ENCODE measurements at regions of chr3 and their contacts with region 1.

Region 1: GRCh38 chr3:196528639-196529233 is 13.6 kb upstream of the SMCO1 start:
- DNase-seq: no peak
- H3K4me3 ChIP-seq: peak overlapping the region; percentile 57
- CTCF ChIP-seq: peak; percentile 82

Region 2: GRCh38 chr3:196506687-196507086 is 22.0 kb before region 1 on chr3:
- CTCF ChIA-PET with region 1: interaction called, 23 read pairs
- POLR2A ChIA-PET with region 1: no interaction called
- DNase-seq: no peak
- H3K4me3 ChIP-seq: no peak overlapping the region
- CTCF ChIP-seq: no peak

Region 3: GRCh38 chr3:196513697-196514349 is 14.9 kb before region 1 on chr3:
- CTCF ChIA-PET with region 1: interaction called, 23 read pairs
- POLR2A ChIA-PET with region 1: no interaction called
- DNase-seq: no peak
- H3K4me3 ChIP-seq: no peak overlapping the region
- CTCF ChIP-seq: no peak

Region 4: GRCh38 chr3:196554205-196554604 is 25.5 kb after region 1 on chr3:
- CTCF ChIA-PET with region 1: interaction called, 14 read pairs
- POLR2A ChIA-PET with region 1: no interaction called
- DNase-seq: no peak
- H3K4me3 ChIP-seq: no peak overlapping the region
- CTCF ChIP-seq: no peak

Measured in AG04449 (cell line).